AG04450 (cell line): ENCODE measurements at regions of chr1 and their contacts with region 1.

Region 1: GRCh38 chr1:89945852-89946476 is 48.9 kb upstream of the ZNF326 start:
- DNase-seq: no peak
- H3K4me3 ChIP-seq: no peak overlapping the region
- H3K27ac ChIP-seq: no peak overlapping the region
- H3K27me3 ChIP-seq: no peaks in the 10 kb centered on the region
- CTCF ChIP-seq: no peak

Region 2: DNA sequence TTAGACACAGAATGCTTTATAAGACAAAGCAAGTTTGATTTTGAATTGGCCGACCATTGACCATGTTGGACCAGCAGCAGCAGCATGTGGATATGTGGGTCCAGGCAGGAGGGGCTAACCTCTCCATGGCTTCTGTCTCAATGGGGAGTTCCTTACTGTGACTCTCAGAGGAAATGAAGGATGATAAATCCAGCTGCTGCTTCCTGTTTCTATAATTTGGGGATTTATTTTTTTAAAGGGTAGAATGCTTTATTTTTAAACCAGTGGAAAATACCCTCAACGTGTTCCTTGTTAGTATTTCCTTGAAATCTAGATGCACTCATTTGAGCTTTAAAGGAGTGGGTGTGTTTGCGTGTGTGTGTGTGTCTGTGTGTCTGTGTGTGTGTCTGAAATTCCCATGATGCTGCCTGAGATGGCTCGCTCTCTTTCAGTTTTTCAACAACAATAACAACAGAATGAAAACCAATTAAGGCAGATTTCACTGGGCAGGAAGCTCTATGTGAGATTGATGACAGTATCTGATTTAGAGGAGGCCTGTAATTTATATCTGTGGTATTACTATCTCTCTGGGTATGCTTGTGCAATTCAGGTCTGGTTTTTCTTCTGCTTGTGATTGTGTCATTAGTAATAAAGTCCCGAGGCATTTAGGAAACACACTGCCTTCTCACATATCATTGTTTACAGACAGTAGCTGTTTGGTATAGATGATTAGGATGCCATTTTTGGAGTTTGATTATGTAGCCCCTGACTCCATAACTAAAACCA is 37.1 kb before region 1 on chr1:
- CTCF ChIA-PET with region 1: interaction called, 6 read pairs
- POLR2A ChIA-PET with region 1: interaction called, 19 read pairs
- DNase-seq: no peak
- H3K4me3 ChIP-seq: no peak overlapping the region
- H3K27ac ChIP-seq: peak overlapping the region; percentile 73
- H3K27me3 ChIP-seq: no peaks in the 10 kb centered on the region
- CTCF ChIP-seq: no peak

Region 3: GRCh38 chr1:90046635-90047034 is 100.7 kb after region 1 on chr1:
- CTCF ChIA-PET with region 1: no interaction called
- POLR2A ChIA-PET with region 1: no interaction called
- DNase-seq: no peak
- H3K4me3 ChIP-seq: no peak overlapping the region
- H3K27ac ChIP-seq: no peak overlapping the region
- H3K27me3 ChIP-seq: peaks cover 10% of the 10 kb centered on the region
- CTCF ChIP-seq: no peak